ENCODE measurements at regions of chr16 and their contacts with region 1.

Region 1: DNA sequence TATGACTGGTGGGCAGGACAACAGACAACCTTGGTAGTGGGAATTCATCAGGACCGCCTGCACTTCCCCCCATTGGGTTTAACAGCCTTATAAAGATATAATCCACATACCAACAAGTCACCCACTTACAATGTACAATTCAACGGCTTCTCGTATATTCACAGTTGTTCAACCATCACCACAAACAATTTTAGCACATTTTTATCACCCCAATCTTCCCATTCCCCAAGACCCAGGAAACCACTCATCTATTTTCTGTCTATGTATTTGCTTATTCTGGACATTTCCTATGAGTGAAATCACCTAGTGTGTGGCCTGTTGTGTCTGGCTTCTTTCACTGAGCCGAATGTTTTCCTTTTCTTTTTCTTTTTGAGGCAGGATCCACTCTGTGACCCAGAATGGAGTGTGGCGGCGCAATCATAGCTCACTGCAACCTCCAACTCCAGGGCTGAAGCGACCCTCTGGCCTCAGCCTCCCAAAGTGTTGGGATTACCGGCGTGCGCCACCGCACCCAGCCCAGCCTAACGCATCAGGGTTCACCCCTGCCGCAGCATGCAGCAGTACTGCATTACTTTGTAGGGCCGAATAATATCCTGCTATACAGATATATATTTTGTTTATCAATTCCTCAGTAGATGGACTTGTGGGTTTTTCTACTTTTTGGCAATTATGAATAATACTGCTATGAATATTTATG is 10.9 kb downstream of the ANKS3 start:
- DNase-seq: no peak

Region 2: GRCh38 chr16:4624015-4624826 is 99.0 kb before region 1 on chr16 and contains the start of gene MGRN1:
- in situ Hi-C with region 1: no loop called
- DNase-seq: peak; percentile 98
- total RNA-seq, gene MGRN1: 13.3 and 21.4 TPM in 2 replicates

Region 3: GRCh38 chr16:4839942-4840341 is 116.7 kb after region 1 on chr16:
- in situ Hi-C with region 1: loop called (anchors 10 kb)
- DNase-seq: no peak